ENCODE measurements at regions of chr22 and their contacts with region 1.

Region 1: DNA sequence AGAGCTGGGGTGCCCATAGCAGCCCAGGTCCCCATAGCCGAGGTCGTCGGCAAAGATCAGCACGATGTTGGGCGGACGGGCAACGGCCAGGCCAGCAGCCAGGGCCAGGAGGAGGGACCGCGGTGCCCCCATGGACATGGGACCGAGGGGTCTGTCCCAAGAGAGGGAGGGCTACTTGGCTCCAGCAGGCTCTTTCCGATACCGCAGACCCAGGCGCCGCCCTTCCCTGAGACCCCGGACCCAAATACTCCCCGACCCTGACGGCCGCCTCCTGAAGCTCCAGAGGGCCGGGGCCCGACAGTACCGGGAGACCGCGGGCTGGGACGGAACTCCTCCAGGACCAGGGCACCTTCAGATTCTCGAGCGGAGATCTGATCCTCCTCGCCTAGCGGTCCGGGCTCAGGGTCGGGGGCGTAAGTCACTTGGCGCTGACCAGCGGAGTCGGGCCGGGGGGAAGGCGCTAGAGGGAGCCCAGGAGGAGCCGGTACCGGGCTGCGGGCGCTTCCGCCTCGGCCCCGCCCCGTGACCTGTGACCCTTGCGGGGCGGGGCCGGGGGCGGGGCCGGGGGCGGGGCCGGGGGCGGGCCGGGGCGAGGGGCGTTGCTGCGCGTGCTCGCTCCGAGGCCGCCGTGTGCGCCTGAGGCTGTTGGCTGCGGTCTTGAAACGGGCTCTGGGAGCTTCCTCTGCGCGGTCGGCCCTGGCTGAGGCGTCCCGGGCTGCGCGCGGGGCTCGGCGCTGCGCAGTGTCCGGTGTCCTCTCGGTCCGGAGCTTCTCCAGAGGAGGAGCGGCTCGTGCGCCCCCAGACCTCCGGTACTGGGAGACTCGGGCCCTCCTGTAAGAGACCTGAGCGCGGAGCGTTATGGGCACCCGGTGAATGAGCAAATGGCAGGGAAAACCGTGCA is at the start of gene ARSA:
- DNase-seq: peak; percentile 76
- H3K4me3 ChIP-seq: peak within 1 kb of the TSS; percentile 88 to 98 (median 91)
- H3K27ac ChIP-seq: peak within 1 kb of the TSS; percentile 14
- H3K4me1 ChIP-seq: peaks cover 23% of the 10 kb centered on the region
- H3K27me3 ChIP-seq: no peaks in the 10 kb centered on the region
- CTCF ChIP-seq: peak in 1 of 2 donors; percentile 64
- total RNA-seq, gene ARSA: 32.7 to 50.4 TPM

Region 2: GRCh38 chr22:50551160-50551752 is 76.6 kb before region 1 on chr22:
- CTCF ChIA-PET with region 1: no interaction called
- dilution Hi-C with region 1: no loop called
- in situ Hi-C with region 1: no loop called
- intact Hi-C with region 1: no loop called
- DNase-seq: no peak
- H3K4me3 ChIP-seq: no peak overlapping the region
- H3K27ac ChIP-seq: no peak overlapping the region
- H3K4me1 ChIP-seq: no peaks in the 10 kb centered on the region
- H3K27me3 ChIP-seq: peaks cover 4% of the 10 kb centered on the region
- CTCF ChIP-seq: no peak

Region 3: DNA sequence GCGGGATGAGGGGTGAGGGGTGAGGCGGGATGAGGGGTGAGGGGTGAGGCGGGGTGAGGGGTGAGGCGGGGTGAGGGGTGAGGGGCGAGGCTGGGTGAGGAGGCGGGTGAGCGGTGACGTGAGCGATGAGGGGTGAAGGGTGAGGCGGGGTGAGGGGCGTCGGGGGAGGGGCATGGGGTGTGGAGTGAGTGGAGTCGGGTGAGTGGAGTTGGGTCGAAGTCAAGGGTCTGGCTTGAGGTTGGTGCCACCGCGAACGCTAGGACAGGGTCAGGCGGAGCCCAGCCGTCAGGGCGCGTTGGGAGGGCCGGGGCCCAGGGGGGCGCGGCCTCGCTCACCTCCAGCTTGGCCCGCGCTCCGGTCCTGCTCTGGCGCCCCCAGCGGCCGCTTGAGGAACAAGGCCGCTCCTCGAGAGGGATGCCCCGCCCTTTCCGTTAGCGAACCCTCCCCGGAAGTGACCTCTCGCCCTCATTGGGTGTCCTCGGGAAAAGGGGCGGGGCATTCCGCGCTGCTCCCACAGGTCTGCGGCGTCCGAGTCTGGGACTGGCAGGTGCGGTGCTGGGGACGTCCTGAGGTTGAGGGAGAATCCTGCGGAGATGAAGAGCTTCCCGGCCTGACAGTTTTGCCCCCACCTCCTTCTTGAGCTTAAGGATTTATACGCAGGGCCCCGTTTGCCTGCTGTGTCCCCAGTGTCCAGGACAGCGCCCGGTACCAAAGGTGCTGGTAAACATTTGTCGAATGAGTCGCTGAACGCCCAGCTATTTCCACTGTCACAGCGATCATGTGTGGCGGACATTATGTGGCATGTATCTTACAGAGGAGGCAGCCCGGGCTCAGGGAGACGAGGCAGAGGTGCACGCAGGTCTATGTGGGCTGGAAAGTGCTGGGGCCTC is 65.1 kb before region 1 on chr22 and contains the start of gene SYCE3:
- CTCF ChIA-PET with region 1: no interaction called
- dilution Hi-C with region 1: no loop called
- in situ Hi-C with region 1: no loop called
- intact Hi-C with region 1: no loop called
- DNase-seq: peak; percentile 91
- H3K4me3 ChIP-seq: peak within 1 kb of the TSS; percentile 57 to 79 (median 69)
- H3K27ac ChIP-seq: no peak within 1 kb of the TSS
- H3K4me1 ChIP-seq: peaks cover 15% of the 10 kb centered on the region
- H3K27me3 ChIP-seq: no peaks in the 10 kb centered on the region
- CTCF ChIP-seq: peak; percentile 75 to 92
- total RNA-seq, gene SYCE3: not detected

Region 4: DNA sequence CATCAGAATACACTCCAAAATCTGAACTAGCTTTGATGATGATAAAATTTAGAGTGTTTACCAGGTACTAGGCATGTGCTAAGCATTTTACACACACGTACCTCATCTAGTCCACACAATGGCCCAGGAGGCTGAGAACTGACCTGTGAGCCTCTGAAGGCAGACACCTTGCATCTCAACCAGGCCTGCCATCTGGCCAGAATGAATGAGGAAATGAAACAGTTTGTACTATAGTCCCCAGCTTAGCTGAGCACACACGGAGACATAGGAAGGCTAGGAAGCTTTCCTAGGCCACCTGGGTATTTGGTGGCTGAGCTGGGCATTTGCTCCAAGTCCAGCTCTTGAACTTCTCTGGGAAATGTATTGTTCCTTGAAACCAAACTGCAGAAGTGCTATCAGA is 37.8 kb after region 1 on chr22:
- CTCF ChIA-PET with region 1: no interaction called
- dilution Hi-C with region 1: loop called (anchors 5 kb)
- in situ Hi-C with region 1: no loop called
- intact Hi-C with region 1: no loop called
- DNase-seq: no peak
- H3K4me3 ChIP-seq: no peak overlapping the region
- H3K27ac ChIP-seq: no peak overlapping the region
- H3K4me1 ChIP-seq: no peaks in the 10 kb centered on the region
- H3K27me3 ChIP-seq: no peaks in the 10 kb centered on the region
- CTCF ChIP-seq: no peak

Region 5: GRCh38 chr22:50691521-50691920 is 63.6 kb after region 1 on chr22:
- CTCF ChIA-PET with region 1: no interaction called
- dilution Hi-C with region 1: loop called (anchors 5 kb)
- in situ Hi-C with region 1: no loop called
- intact Hi-C with region 1: loop called (anchors 1 kb)
- DNase-seq: peak; percentile 28
- H3K4me3 ChIP-seq: no peak overlapping the region
- H3K27ac ChIP-seq: no peak overlapping the region
- H3K4me1 ChIP-seq: peaks cover 14% of the 10 kb centered on the region
- H3K27me3 ChIP-seq: no peaks in the 10 kb centered on the region
- CTCF ChIP-seq: peak; percentile 63 to 72

Region 6: GRCh38 chr22:50696797-50697561 is 69.1 kb after region 1 on chr22:
- CTCF ChIA-PET with region 1: no interaction called
- dilution Hi-C with region 1: loop called (anchors 5 kb)
- in situ Hi-C with region 1: no loop called
- intact Hi-C with region 1: no loop called
- DNase-seq: peak; percentile 11
- H3K4me3 ChIP-seq: peak overlapping the region in 2 of 3 experiments; percentile 51 to 56
- H3K27ac ChIP-seq: no peak overlapping the region
- H3K4me1 ChIP-seq: peaks cover 25% of the 10 kb centered on the region
- H3K27me3 ChIP-seq: no peaks in the 10 kb centered on the region
- CTCF ChIP-seq: peak; percentile 36 to 71